Dendritic cell treated with granulocyte-macrophage colony-stimulating factor and Interleukin-4, amounts not matched to agents 40 ng/mL and 50 ng/mL, for 4 days (primary cell): ENCODE measurements at regions of chr5 and their contacts with region 1.

Region 1: DNA sequence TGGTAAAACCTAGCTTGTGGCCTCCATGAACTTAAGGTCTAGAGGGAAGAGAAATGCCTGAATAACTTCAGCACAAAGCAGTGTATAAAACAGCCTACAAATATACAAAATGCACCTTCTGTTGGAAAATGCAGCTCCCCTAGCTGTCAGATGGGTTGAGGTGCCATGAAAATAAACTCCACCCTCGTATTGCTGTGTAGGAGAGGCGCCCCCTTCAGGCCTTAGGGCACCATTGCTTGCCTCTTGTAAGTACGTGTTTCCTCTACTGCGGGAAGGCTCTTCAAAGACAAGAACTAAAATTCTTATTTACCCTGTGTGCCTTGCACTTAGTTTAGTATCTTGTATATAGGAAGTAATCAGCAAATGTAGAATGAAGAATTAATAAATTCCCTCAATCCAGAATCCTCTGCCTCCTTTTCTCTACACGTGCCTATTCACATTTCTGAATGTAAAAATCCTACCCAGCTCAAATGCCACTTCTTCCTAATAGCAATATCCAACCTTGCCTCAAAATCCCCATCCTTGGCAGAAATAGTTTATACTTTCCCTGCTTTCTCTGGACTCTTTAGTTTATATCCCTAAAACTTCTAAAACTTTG is 393.7 kb upstream of the PDE4D start:
- H3K4me3 Mint-ChIP-seq: no peak overlapping the region
- H3K27ac Mint-ChIP-seq: no peak overlapping the region
- H3K4me1 Mint-ChIP-seq: peaks cover 9% of the 10 kb centered on the region
- H3K27me3 Mint-ChIP-seq: no peaks in the 10 kb centered on the region

Region 2: DNA sequence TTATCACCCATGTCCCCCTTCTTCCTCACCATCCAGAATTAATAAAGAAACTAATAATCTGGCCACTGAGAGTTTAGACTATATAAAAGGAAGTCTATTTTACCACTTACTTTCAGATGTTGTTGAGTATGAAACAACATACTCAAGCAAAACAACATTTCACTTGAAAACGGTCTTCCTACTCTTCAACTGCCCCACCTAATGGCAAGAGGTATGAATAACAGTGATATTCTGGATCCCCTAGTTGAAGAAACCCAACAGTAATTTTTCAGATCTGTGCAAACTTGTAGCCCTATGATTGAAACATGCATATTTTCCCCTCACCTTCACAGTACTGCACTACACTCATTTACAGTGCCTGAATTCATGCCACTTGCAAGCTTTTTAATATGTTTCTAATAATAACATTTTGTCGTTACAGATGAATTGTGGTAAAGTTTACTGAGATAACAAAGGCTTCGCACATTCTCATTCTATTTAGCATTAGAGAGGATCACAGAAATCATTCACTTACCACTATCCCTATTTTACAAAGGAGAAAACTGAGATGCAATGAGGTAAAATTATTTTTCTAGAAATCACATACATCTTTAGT is 125.8 kb before region 1 on chr5:
- intact Hi-C with region 1: loop called (anchors 5 kb)
- H3K4me3 Mint-ChIP-seq: no peak overlapping the region
- H3K27ac Mint-ChIP-seq: no peak overlapping the region
- H3K4me1 Mint-ChIP-seq: peaks cover 10% of the 10 kb centered on the region
- H3K27me3 Mint-ChIP-seq: no peaks in the 10 kb centered on the region

Region 3: DNA sequence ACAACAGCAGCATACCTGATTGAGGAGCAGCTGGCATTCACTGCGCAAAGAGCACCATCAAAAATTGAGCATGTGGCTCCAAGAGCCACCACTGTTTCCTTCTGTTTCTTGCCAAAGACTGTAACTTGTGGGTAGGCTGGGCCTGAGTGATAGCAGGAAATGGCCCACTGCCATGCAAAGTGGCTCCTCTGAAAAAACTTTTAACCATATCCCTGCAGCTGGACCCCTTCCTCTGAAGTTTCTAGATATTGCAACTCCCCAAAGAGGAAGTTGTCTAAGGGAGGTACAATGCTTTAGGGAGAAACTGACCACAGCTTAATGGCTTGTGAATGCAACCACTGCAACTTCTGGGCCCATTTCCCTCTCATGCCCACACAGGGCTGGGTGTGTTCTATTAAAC is 38.4 kb before region 1 on chr5:
- intact Hi-C with region 1: no loop called
- H3K4me3 Mint-ChIP-seq: peak overlapping the region; percentile 35
- H3K27ac Mint-ChIP-seq: peak overlapping the region; percentile 73
- H3K4me1 Mint-ChIP-seq: peaks cover 42% of the 10 kb centered on the region
- H3K27me3 Mint-ChIP-seq: no peaks in the 10 kb centered on the region

Region 4: GRCh38 chr5:60457233-60457632 is 170.0 kb after region 1 on chr5:
- intact Hi-C with region 1: no loop called
- H3K4me3 Mint-ChIP-seq: no peak overlapping the region
- H3K27ac Mint-ChIP-seq: no peak overlapping the region
- H3K4me1 Mint-ChIP-seq: no peaks in the 10 kb centered on the region
- H3K27me3 Mint-ChIP-seq: peaks cover 1% of the 10 kb centered on the region

Region 5: GRCh38 chr5:60604771-60605170 is 317.5 kb after region 1 on chr5:
- intact Hi-C with region 1: no loop called
- H3K4me3 Mint-ChIP-seq: no peak overlapping the region
- H3K27ac Mint-ChIP-seq: no peak overlapping the region
- H3K4me1 Mint-ChIP-seq: no peaks in the 10 kb centered on the region
- H3K27me3 Mint-ChIP-seq: no peaks in the 10 kb centered on the region

Region 6: DNA sequence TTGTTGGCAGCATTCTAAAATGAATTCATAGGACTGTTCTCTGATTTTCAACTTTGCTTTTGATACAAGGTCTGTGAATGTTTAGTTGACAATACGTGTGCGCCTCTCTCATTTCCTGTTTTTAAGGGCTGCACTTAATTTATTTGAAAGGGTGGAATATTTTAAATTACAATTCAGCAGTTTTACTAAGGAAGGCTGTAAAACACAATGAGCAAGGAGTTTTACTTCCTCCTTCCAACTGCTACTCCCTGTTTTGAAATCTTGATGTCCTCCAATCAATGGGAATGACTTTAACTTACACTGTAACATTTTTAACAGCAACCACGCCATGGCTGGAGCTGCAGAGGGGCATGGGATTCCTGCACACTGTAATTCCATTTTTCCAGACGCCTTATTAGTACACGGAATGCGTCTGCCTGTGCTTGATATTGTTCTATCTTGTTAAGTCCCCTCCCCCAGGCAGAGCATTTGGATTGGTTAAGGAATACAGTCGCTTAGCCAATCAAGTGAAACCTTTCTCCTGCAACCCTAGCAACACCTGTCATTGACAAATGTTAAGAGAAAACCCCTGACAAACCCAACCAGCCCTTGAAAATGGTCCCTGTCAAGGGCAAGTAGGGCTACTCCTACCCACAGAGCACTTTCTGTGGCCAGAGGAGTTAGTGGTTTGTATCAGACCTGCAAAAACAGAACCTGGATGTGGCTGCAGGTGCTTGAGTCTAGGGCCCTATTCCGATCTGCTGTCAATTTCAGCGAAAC is 1032.3 kb after region 1 on chr5:
- intact Hi-C with region 1: no loop called
- H3K4me3 Mint-ChIP-seq: peak overlapping the region; percentile 30
- H3K27ac Mint-ChIP-seq: peak overlapping the region; percentile 87
- H3K4me1 Mint-ChIP-seq: peaks cover 76% of the 10 kb centered on the region
- H3K27me3 Mint-ChIP-seq: no peaks in the 10 kb centered on the region